SK-N-SH (cell line): ENCODE measurements at regions of chr2 and their contacts with region 1.

Region 1: DNA sequence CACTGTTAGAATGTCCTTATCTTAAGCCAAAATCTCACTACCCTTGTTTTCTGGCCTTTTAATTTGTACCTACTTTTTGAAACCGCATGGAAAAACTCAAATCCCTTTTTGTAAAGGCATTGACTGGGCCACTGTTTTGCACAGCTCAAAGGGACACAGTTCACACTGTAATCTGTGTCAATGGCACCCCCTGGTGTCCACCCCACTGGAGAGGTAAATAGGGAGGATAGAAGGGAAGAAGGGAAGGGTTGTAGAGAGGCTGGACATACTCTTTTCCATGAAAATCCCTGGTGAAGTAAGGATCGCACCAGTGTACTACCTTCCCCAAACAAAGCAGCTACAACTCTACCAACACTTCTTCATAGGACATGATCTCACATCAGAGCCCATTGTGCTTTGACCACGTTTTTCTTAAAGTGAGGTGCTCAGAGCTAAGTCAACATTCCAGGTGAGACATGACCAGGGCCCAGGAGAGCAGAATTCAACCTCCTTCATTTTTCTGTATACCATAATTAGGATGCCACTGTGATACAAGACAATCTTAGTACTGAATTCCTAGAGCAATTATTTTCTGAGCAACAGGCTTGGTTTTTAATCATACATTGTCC is 92.4 kb upstream of the RMDN2 start:
- DNase-seq: peak; percentile 81
- H3K4me3 ChIP-seq: no peak overlapping the region
- H3K27ac ChIP-seq: peak overlapping the region in 1 of 2 experiments; percentile 53; a peak in 2 of 4 replicates
- H3K4me1 ChIP-seq: peaks cover 14 to 21% of the 10 kb centered on the region in 2 experiments
- H3K27me3 ChIP-seq: no peaks in the 10 kb centered on the region
- CTCF ChIP-seq: peak; percentile 97
- EP300 ChIP-seq: peak in 1 of 2 experiments; percentile 18; a peak in 1 of 4 replicates
- RAD21 ChIP-seq: peak; percentile 99

Region 2: DNA sequence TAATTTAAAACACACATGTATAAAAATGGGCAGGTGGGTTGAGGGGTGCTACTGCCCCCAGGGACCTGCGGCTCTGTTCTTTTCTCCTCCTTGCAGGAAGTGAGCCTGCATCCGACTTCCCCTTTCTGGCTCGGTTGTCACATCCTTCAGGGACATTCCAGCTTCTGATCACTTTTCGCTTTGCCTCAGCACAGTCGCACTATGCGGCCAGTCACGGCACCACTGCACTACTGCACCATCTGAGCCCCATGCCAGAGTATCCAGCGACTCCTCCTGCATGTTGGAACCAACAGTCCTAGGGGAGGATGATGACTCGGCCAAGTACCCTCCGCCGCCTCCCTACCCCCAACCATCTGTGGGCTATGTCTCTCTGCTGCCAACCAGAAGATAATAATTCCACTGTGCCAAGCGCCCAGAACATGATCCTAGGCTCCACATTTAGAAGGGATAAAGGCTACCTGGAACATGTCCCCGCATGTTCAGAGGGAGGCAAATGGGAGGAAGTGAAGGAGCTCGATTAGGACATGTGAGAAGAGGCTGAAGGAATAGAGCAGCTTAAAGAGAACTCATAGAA is 178.8 kb before region 1 on chr2:
- CTCF ChIA-PET with region 1: interaction called, 11 read pairs
- POLR2A ChIA-PET with region 1: no interaction called
- DNase-seq: no peak
- H3K4me3 ChIP-seq: no peak overlapping the region
- H3K27ac ChIP-seq: peak overlapping the region; percentile 77 to 87
- H3K4me1 ChIP-seq: peaks cover 62 to 65% of the 10 kb centered on the region in 2 experiments
- H3K27me3 ChIP-seq: no peaks in the 10 kb centered on the region
- CTCF ChIP-seq: no peak
- EP300 ChIP-seq: no peak; a peak in 1 of 4 replicates
- RAD21 ChIP-seq: no peak

Region 3: DNA sequence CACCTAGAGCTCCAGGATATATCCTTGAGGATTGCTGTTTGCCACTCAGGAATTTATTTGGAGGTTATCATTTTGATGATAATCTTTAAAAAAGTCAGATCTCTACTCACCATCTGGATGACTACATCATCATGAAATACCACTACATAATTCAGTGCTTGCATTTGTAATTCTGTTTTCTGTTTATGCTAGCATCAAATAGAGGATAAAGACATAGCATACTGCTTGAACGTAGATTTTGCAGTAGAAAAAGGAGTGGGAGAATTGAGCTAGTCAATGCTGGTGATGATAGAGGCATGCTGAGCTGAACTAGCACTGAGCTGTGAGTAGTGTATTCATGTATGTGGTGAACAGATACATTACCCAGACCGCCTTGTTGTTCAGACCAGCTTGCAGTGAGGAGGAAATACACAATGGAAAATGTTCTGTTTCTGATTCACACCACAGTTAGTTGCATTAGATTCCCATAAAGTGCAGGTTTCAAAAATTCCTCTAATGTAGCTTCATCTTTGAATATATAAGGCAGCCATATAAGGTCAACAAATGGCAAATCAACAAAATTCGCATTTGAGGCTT is 92.4 kb before region 1 on chr2:
- CTCF ChIA-PET with region 1: no interaction called
- POLR2A ChIA-PET with region 1: no interaction called
- DNase-seq: no peak
- H3K4me3 ChIP-seq: no peak overlapping the region
- H3K27ac ChIP-seq: peak overlapping the region in 1 of 2 experiments; percentile 79; a peak in 3 of 4 replicates
- H3K4me1 ChIP-seq: peaks cover 0 to 14% of the 10 kb centered on the region in 2 experiments; a peak in 3 of 4 replicates
- H3K27me3 ChIP-seq: no peaks in the 10 kb centered on the region
- CTCF ChIP-seq: no peak
- EP300 ChIP-seq: peak in 1 of 2 experiments; percentile 8; a peak in 1 of 4 replicates
- RAD21 ChIP-seq: no peak

Region 4: GRCh38 chr2:37819186-37819585 is 13.5 kb before region 1 on chr2:
- CTCF ChIA-PET with region 1: interaction called, 11 read pairs
- POLR2A ChIA-PET with region 1: no interaction called
- DNase-seq: peak; percentile 27
- H3K4me3 ChIP-seq: no peak overlapping the region
- H3K27ac ChIP-seq: peak overlapping the region; percentile 47 to 68; a peak in 3 of 4 replicates
- H3K4me1 ChIP-seq: peaks cover 12 to 15% of the 10 kb centered on the region in 2 experiments; a peak in 3 of 4 replicates
- H3K27me3 ChIP-seq: no peaks in the 10 kb centered on the region
- CTCF ChIP-seq: no peak
- EP300 ChIP-seq: peak in 1 of 2 experiments; percentile 80; a peak in 1 of 4 replicates
- RAD21 ChIP-seq: no peak

Region 5: GRCh38 chr2:37851828-37852584 is 19.3 kb after region 1 on chr2:
- CTCF ChIA-PET with region 1: interaction called, 22 read pairs
- POLR2A ChIA-PET with region 1: interaction called, 7 read pairs
- DNase-seq: no peak
- H3K4me3 ChIP-seq: no peak overlapping the region
- H3K27ac ChIP-seq: peak overlapping the region in 1 of 2 experiments; percentile 80; a peak in 3 of 4 replicates
- H3K4me1 ChIP-seq: peaks cover 14 to 47% of the 10 kb centered on the region in 2 experiments; a peak in 3 of 4 replicates
- H3K27me3 ChIP-seq: no peaks in the 10 kb centered on the region
- CTCF ChIP-seq: no peak
- EP300 ChIP-seq: no peak
- RAD21 ChIP-seq: no peak

Region 6: GRCh38 chr2:37865640-37866039 is 32.9 kb after region 1 on chr2:
- CTCF ChIA-PET with region 1: interaction called, 22 read pairs
- POLR2A ChIA-PET with region 1: no interaction called
- DNase-seq: no peak
- H3K4me3 ChIP-seq: no peak overlapping the region
- H3K27ac ChIP-seq: no peak overlapping the region
- H3K4me1 ChIP-seq: peaks cover 2 to 20% of the 10 kb centered on the region in 2 experiments; a peak in 2 of 4 replicates
- H3K27me3 ChIP-seq: no peaks in the 10 kb centered on the region
- CTCF ChIP-seq: no peak
- EP300 ChIP-seq: no peak
- RAD21 ChIP-seq: no peak

Region 7: GRCh38 chr2:37871456-37872191 is 38.9 kb after region 1 on chr2:
- CTCF ChIA-PET with region 1: interaction called, 247 read pairs
- POLR2A ChIA-PET with region 1: no interaction called
- DNase-seq: no peak
- H3K4me3 ChIP-seq: no peak overlapping the region
- H3K27ac ChIP-seq: peak overlapping the region; percentile 63 to 96
- H3K4me1 ChIP-seq: peaks cover 20 to 47% of the 10 kb centered on the region in 2 experiments; a peak in 3 of 4 replicates
- H3K27me3 ChIP-seq: no peaks in the 10 kb centered on the region
- CTCF ChIP-seq: no peak
- EP300 ChIP-seq: no peak
- RAD21 ChIP-seq: no peak